PC-9 (cell line): ENCODE measurements at regions of chr4 and their contacts with region 1.

Region 1: GRCh38 chr4:139337612-139338011 is 35.3 kb upstream of the NDUFC1 start:
- DNase-seq: no peak
- H3K4me3 ChIP-seq: no peak overlapping the region
- H3K27ac ChIP-seq: no peak overlapping the region
- H3K4me1 ChIP-seq: no peaks in the 10 kb centered on the region
- H3K27me3 ChIP-seq: no peaks in the 10 kb centered on the region
- CTCF ChIP-seq: no peak

Region 2: DNA sequence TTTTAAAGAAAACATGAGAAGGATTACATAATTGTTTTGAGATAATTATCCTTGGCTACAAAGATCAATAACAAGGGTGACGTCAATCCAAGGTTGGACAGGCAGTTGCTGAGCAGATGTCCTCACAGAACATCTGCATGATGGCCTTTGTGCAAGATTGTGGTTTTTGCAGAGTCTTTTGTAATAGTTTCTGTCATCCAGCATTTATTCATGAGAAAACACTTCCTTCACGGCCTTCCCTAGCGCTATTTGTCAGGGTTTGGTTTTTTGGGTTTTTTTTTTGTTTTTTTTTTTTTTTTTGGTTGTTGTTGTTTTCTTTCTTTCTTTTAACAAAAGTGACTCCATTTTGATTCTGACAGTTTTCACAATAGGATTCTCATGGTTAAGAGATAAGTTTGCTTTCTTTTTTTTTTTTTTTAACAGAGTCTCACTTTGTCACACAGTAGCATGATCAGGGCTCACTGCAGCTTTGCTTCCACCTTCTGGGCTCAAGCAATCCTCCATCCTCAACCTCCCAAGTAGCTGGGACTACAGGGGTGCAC is 129.1 kb before region 1 on chr4:
- CTCF ChIA-PET with region 1: no interaction called
- POLR2A ChIA-PET with region 1: no interaction called
- intact Hi-C with region 1: no loop called
- DNase-seq: no peak
- H3K4me3 ChIP-seq: no peak overlapping the region
- H3K27ac ChIP-seq: no peak overlapping the region
- H3K4me1 ChIP-seq: no peaks in the 10 kb centered on the region
- H3K27me3 ChIP-seq: no peaks in the 10 kb centered on the region
- CTCF ChIP-seq: no peak

Region 3: DNA sequence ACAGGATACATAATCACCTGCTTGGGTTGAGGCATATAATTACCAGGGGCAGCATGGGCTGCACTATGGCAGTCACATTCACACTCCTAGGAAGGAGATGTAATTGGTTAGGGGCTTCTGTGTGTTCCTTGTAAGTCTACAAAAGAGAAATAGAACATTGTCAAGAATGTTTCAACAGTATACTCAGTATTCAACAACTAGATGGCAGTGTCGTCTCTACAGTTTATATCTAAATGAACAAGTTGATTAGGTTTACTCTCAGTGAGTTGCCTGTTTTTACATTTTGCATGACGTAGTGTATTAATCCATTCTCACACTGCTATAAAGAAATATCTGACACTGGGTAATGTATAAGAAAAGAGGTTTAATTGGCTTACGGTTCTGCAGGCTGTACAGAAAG is 65.8 kb after region 1 on chr4:
- CTCF ChIA-PET with region 1: interaction called, 10 read pairs
- POLR2A ChIA-PET with region 1: no interaction called
- intact Hi-C with region 1: no loop called
- DNase-seq: no peak
- H3K4me3 ChIP-seq: no peak overlapping the region
- H3K27ac ChIP-seq: no peak overlapping the region
- H3K4me1 ChIP-seq: no peaks in the 10 kb centered on the region
- H3K27me3 ChIP-seq: no peaks in the 10 kb centered on the region
- CTCF ChIP-seq: no peak